IMR-90 (cell line): ENCODE measurements at regions of chr12 and their contacts with region 1.

Region 1: GRCh38 chr12:121230538-121230907 is 20.6 kb downstream of the P2RX4 start:
- DNase-seq: no peak
- ATAC-seq: no peak
- H3K4me3 ChIP-seq: no peak overlapping the region
- H3K27ac ChIP-seq: no peak overlapping the region
- H3K4me1 ChIP-seq: no peaks in the 10 kb centered on the region
- H3K27me3 ChIP-seq: no peaks in the 10 kb centered on the region
- CTCF ChIP-seq: no peak
- POLR2A ChIP-seq: no peak
- RAD21 ChIP-seq: no peak

Region 2: DNA sequence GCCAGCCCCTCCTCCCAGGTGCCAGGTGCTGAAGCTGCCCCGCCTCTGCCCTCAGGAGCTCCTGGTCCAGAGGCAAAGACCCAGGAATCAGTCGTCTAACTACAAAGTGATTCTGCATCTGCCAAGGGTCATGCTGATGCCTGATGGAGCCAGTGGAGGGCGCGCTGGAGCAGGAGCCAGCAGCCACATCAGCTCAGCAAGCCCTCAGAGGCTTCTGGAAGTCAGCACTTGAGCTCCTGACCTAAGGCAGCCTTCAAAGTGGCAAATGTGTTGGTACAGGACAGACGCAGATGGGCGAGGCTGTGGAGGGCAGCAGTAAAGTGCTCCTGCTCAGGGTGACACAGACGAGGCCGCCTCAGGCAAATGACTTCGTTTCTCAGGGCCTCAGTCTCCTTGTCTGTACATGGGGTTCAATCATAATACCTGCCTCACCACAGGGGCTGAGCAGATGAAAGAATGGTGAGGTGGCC is 225.1 kb before region 1 on chr12:
- CTCF ChIA-PET with region 1: interaction called, 3 read pairs
- POLR2A ChIA-PET with region 1: no interaction called
- dilution Hi-C with region 1: no loop called
- in situ Hi-C with region 1: no loop called
- intact Hi-C with region 1: loop called (anchors 1 kb)
- DNase-seq: peak; percentile 23
- ATAC-seq: peak; percentile 79
- H3K4me3 ChIP-seq: no peak overlapping the region
- H3K27ac ChIP-seq: no peak overlapping the region
- H3K4me1 ChIP-seq: no peaks in the 10 kb centered on the region
- H3K27me3 ChIP-seq: no peaks in the 10 kb centered on the region
- CTCF ChIP-seq: peak; percentile 61
- POLR2A ChIP-seq: no peak
- RAD21 ChIP-seq: peak; percentile 58

Region 3: DNA sequence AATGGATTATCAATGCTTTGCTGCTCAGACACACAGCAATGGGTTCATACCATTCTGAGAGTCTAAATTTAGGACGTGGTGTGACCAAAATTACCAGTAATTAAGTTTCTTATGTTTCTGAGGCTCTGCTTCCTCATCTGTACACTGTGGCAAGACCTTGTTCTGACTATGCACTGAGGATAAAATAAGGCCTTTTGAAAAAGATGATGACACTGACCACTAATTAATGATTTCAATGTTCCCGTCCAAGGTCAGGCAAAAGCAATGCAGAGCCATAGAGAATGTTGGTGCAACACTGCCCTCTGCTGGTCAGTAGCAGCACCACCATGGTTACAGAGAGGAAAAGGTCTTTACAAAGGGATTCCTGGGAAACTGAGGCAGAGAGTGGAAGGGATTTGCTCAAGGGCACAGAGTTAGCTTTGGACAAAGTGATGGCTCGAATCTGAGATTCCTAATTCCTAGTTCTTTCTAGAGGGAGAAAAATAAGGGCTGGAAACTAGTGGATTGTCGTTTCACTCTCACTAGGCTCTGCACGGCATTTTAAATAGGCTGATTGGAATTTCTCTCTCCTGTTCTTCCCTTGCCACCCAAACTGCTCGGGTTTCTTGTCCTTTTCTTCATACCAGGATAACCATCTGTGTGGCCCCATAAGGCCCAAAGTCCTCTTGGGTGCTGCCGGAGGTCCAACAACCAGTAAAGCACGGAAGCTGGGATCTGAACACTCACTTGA is 120.1 kb before region 1 on chr12:
- CTCF ChIA-PET with region 1: no interaction called
- POLR2A ChIA-PET with region 1: no interaction called
- dilution Hi-C with region 1: no loop called
- in situ Hi-C with region 1: no loop called
- intact Hi-C with region 1: loop called (anchors 1 kb)
- DNase-seq: peak; percentile 61
- ATAC-seq: peak; percentile 92
- H3K4me3 ChIP-seq: no peak overlapping the region
- H3K27ac ChIP-seq: no peak overlapping the region
- H3K4me1 ChIP-seq: no peaks in the 10 kb centered on the region
- H3K27me3 ChIP-seq: peaks cover 2% of the 10 kb centered on the region
- CTCF ChIP-seq: peak; percentile 88
- POLR2A ChIP-seq: no peak
- RAD21 ChIP-seq: peak; percentile 88

Region 4: DNA sequence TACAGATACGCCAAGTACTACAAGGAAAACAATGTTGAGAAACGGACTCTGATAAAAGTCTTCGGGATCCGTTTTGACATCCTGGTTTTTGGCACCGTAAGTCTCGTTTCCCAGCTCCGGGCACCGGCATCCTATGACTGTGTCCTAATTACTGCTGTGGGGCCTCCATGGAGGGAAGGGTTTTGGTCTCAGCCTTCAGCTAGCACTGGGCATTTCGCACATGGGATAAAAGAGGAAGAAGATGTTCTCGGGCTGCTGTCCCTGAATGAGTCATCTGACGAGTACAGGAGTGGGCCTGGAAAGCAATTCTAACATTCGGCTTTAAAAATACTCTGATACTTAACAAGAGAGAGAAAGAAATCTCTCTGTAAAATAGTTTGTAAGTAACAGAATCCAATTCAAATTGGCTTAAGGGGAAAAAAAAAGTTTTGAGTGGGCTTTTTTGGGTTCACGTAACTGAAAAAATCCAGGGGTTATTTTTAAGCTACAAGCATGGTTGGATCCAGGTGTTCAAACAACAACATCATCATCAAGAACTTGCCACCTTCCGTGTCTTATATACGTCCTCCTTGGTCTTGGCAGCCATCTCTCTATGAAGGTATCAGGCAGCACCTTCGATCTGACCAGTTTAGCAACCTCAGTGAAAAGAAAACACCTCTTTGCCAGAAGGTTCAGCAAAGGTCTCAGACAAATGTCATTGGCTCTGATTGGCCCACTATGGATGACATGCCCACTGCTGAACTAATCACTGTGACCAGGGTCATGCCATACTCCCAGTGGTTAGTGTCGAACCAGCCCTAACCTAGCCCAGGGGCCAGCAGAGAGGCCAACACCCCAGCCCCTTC is 54.9 kb before region 1 on chr12:
- CTCF ChIA-PET with region 1: no interaction called
- POLR2A ChIA-PET with region 1: no interaction called
- dilution Hi-C with region 1: no loop called
- in situ Hi-C with region 1: no loop called
- intact Hi-C with region 1: no loop called
- DNase-seq: no peak
- ATAC-seq: no peak
- H3K4me3 ChIP-seq: no peak overlapping the region
- H3K27ac ChIP-seq: no peak overlapping the region
- H3K4me1 ChIP-seq: peaks cover 2% of the 10 kb centered on the region; the same call in 1 of the 2 replicates
- H3K27me3 ChIP-seq: no peaks in the 10 kb centered on the region; the same call in 1 of the 2 replicates
- CTCF ChIP-seq: no peak
- POLR2A ChIP-seq: no peak
- RAD21 ChIP-seq: no peak